ENCODE measurements at regions of chr6 and their contacts with region 1.

Region 1: GRCh38 chr6:109690737-109691621 is at the starts of genes AK9 and FIG4:
- DNase-seq: peak; percentile 90 to 99 (median 94)

Region 2: GRCh38 chr6:109440331-109441068 is 250.5 kb before region 1 on chr6 and contains the starts of genes PPIL6 and SMPD2:
- intact Hi-C with region 1: loop called (anchors 10 kb)
- DNase-seq: peak; percentile 70 to 97 (median 81)

Region 3: GRCh38 chr6:109526905-109527628 is 163.9 kb before region 1 on chr6:
- intact Hi-C with region 1: loop called (anchors 5 kb)
- DNase-seq: peak in 3 of 10 donors; percentile 26 to 77 (median 54)

Region 4: DNA sequence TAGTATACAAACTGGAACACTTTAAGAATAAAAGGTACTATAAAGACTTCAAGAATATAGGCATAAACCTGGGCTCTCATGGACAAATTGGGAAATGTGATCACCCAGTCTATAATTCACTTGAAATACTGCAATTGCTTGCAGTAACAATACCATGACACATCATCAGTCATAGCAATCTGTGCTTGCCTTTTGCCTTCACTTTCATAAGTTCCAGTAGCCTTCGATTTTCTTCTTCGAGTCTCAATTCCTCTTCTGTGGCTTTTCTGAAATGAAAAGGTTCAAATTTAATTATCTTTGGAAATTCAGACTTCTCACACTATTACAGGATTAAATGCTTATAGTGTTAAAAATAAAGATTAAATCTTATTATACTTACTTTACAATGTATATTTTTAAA is 111.6 kb before region 1 on chr6:
- intact Hi-C with region 1: no loop called
- DNase-seq: no peak

Region 5: DNA sequence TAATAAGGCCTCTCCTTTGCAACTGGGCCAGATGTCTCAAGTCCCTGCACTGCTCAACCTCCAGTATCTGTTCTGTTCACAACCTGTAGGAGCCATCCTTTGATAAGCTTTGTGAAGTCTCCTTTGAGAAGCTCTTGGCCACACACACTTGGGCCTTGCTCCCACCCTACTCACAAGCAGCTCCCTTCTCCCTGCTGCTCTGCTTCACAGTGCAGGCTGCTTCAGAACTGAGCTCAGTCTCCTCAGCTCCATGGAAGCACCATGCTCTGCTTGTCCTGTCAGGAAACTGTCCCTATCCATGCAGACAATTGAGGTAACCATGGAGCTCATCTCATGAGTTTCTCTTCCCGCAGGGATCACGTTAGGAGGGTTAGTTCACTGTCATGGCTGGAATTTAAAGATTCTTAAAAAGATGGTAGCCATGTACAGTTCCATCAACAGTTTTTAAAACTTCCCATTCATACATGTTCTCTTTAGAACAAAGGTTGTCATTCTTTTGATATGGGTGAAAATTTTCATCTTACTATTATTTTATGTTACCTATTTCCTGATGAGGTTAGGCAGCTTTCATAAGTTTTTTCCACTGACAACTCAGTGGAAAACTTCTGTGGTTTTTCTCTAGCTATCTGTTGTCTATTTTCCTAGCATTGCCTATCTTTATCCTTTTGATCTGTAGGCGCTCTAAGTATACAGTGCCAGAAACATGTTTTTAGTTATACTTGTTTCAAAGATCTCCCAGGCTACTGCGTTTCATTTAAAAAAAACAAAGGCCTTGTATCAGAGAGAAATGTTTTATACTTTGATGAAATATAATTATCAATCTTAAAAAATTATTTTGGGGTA is 62.6 kb before region 1 on chr6:
- intact Hi-C with region 1: no loop called
- DNase-seq: no peak

Region 6: DNA sequence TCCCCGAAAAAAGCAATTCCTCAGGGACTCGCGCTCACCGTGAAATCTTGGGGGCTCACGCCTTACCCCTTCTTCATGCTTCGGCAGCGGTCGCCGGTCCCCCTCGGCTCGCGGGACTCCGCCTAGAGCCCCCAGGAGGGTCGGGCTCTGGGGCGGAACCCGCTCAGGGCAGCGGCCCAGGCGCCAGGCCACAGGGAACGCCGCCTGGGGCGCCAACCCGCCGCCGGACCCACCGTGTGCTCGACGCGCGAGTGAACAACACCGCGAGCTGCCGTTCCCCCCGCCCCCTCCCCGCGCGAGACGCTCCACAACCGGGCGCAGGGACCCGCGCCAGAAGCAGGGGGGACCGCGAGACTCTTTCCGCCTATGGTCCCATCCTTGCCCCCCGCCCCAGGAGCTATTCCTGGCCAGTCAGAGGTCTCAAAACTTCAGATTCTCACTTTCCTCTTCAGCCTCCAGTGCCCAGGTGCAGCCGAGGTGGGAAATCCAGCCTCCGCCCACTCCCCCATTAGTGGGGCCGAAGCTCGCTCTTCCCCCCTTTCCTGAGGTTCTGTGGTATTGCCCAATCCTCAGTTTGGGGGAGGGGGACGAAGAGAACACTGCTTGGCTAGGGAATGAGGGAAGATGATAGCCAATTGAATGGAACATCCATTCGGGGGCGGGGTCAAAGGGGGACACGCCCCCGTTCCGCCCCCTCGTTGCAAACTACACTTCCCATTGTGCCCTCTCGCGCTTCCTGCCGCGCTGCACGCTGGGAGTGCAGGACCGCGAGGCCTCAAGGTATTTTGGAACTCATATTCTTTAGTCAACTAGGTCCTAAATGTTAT is 488.6 kb after region 1 on chr6 and contains the start of gene WASF1:
- intact Hi-C with region 1: loop called (anchors 5 kb)
- DNase-seq: peak; percentile 91 to 99 (median 94)